ENCODE measurements at regions of chr1 and their contacts with region 1.

Region 1: GRCh38 chr1:17059739-17060460 is 6.1 kb upstream of the SDHB start:
- DNase-seq: peak; percentile 30
- ATAC-seq: peak; percentile 100
- H3K4me3 ChIP-seq: no peak overlapping the region
- H3K27ac ChIP-seq: no peak overlapping the region
- H3K4me1 ChIP-seq: peaks cover 6% of the 10 kb centered on the region; the same call in 1 of the 2 replicates
- H3K27me3 ChIP-seq: no peaks in the 10 kb centered on the region
- CTCF ChIP-seq: peak; percentile 80 to 93 (median 81)
- EP300 ChIP-seq: no peak
- POLR2A ChIP-seq: no peak
- RAD21 ChIP-seq: peak; percentile 66

Region 2: DNA sequence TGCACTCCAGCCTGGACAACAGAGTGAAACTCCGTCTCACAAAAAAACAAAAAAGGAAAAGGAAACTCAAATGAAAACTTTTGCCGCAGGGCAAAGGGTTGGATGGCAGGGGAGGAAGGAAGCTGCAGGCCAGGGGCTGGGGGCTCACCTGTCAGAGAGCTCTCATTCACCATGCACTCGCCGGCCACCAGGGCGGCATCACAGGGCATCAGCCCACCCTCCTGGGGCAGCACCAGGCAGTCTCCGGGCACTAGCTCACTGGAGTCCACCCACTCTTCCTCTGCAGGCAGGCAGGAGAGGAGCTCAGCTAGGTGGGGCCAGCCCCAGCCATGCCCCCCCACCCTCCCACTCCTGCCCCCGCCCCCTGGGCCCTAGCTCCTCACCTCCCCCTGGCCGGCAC is 60.0 kb before region 1 on chr1:
- CTCF ChIA-PET with region 1: no interaction called
- POLR2A ChIA-PET with region 1: no interaction called
- RAD21 ChIA-PET with region 1: no interaction called
- SMC1A ChIA-PET with region 1: no interaction called
- in situ Hi-C with region 1: no loop called
- intact Hi-C with region 1: no loop called
- DNase-seq: no peak
- ATAC-seq: no peak
- H3K4me3 ChIP-seq: no peak overlapping the region
- H3K27ac ChIP-seq: no peak overlapping the region
- H3K4me1 ChIP-seq: no peaks in the 10 kb centered on the region
- H3K27me3 ChIP-seq: no peaks in the 10 kb centered on the region
- CTCF ChIP-seq: 0 out of 6 replicates have a peak, but pooled peaks of 1 of the 3 experiments have one; percentile 13
- EP300 ChIP-seq: no peak
- POLR2A ChIP-seq: no peak
- RAD21 ChIP-seq: no peak

Region 3: GRCh38 chr1:17075470-17076255 is 15.8 kb after region 1 on chr1:
- CTCF ChIA-PET with region 1: interaction called, 16 read pairs
- POLR2A ChIA-PET with region 1: no interaction called
- RAD21 ChIA-PET with region 1: interaction called, 4 read pairs
- SMC1A ChIA-PET with region 1: interaction called, 7 read pairs
- in situ Hi-C with region 1: no loop called
- intact Hi-C with region 1: no loop called
- DNase-seq: no peak
- ATAC-seq: peak; percentile 92
- H3K4me3 ChIP-seq: no peak overlapping the region
- H3K27ac ChIP-seq: no peak overlapping the region
- H3K4me1 ChIP-seq: peaks cover 5% of the 10 kb centered on the region
- H3K27me3 ChIP-seq: no peaks in the 10 kb centered on the region
- CTCF ChIP-seq: peak; percentile 1 to 65 (median 41); a peak in 3 of 6 replicates
- EP300 ChIP-seq: no peak
- POLR2A ChIP-seq: no peak
- RAD21 ChIP-seq: 0 out of 2 replicates have a peak, but pooled peaks have one; percentile 14

Region 4: GRCh38 chr1:17335821-17336710 is 276.2 kb after region 1 on chr1:
- CTCF ChIA-PET with region 1: interaction called, 12 read pairs
- POLR2A ChIA-PET with region 1: no interaction called
- RAD21 ChIA-PET with region 1: interaction called, 3 read pairs
- SMC1A ChIA-PET with region 1: interaction called, 8 read pairs
- in situ Hi-C with region 1: no loop called
- intact Hi-C with region 1: loop called (anchors 5 kb)
- DNase-seq: no peak
- ATAC-seq: peak; percentile 85
- H3K4me3 ChIP-seq: no peak overlapping the region
- H3K27ac ChIP-seq: no peak overlapping the region
- H3K4me1 ChIP-seq: no peaks in the 10 kb centered on the region
- H3K27me3 ChIP-seq: no peaks in the 10 kb centered on the region; a peak in 1 of 4 replicates
- CTCF ChIP-seq: peak; percentile 66 to 96 (median 88)
- EP300 ChIP-seq: no peak
- POLR2A ChIP-seq: no peak
- RAD21 ChIP-seq: peak; percentile 58

Region 5: DNA sequence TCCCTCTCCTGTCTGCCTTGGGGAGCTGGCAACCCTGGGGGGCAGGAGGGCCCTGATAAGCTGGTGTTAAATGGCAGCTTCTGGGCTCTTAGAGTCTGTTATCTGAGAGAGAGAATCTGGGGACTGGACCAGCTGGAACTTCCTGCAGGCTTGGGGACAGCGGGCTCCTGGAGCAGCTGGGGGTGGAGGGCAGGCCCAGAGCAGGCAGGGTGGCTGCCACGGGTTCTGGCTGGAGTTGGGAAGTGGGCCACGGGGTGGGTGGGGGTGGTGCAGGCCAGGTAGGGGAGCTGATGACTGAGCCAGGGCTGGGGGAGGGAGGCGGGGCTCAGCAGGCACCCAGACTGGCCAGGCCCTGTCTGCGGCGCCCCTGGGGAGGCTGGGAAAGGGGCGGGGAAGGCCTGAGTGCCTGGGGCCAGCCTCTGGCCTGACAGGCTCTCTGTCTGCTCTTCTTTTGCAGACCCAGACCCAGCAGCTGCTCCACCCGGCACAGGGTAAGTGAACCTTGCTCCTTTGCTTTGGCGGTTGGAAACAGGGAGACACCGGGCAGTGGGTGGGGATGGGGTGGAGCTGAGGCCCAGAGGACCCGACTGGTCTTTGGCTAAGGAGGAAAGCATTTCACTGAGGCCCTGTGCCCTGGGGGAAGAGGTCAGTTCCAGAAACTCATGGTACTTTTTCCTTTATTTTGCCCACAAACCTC is 528.2 kb after region 1 on chr1:
- CTCF ChIA-PET with region 1: no interaction called
- POLR2A ChIA-PET with region 1: no interaction called
- RAD21 ChIA-PET with region 1: no interaction called
- SMC1A ChIA-PET with region 1: no interaction called
- in situ Hi-C with region 1: no loop called
- intact Hi-C with region 1: no loop called
- DNase-seq: no peak
- ATAC-seq: no peak; the same call in 2 of the 3 replicates
- H3K4me3 ChIP-seq: no peak overlapping the region
- H3K27ac ChIP-seq: no peak overlapping the region
- H3K4me1 ChIP-seq: no peaks in the 10 kb centered on the region
- H3K27me3 ChIP-seq: no peaks in the 10 kb centered on the region; a peak in 2 of 4 replicates
- CTCF ChIP-seq: no peak
- EP300 ChIP-seq: no peak
- POLR2A ChIP-seq: no peak
- RAD21 ChIP-seq: no peak